K562 (cell line): ENCODE measurements at regions of chrX and their contacts with region 1.

Region 1: GRCh38 chrX:31036895-31037294 is 34.9 kb downstream of the FTHL17 start:
- DNase-seq: peak; percentile 28 to 45 (median 37)
- ATAC-seq: peak; percentile 89
- H3K4me3 ChIP-seq: no peak overlapping the region
- H3K27ac ChIP-seq: no peak overlapping the region
- H3K4me1 ChIP-seq: no peaks in the 10 kb centered on the region
- H3K27me3 ChIP-seq: no peaks in the 10 kb centered on the region
- CTCF ChIP-seq: peak; percentile 55 to 64 (median 59)
- EP300 ChIP-seq: no peak
- POLR2A ChIP-seq: no peak
- RAD21 ChIP-seq: peak; percentile 34 to 70; a peak in 3 of 4 replicates

Region 2: GRCh38 chrX:30935985-30936384 is 100.9 kb before region 1 on chrX:
- CTCF ChIA-PET with region 1: no interaction called
- POLR2A ChIA-PET with region 1: no interaction called
- in situ Hi-C with region 1: no loop called
- intact Hi-C with region 1: loop called (anchors 5 kb)
- DNase-seq: peak; percentile 14 to 51 (median 30)
- ATAC-seq: peak; percentile 95
- H3K4me3 ChIP-seq: no peak overlapping the region
- H3K27ac ChIP-seq: no peak overlapping the region
- H3K4me1 ChIP-seq: no peaks in the 10 kb centered on the region
- H3K27me3 ChIP-seq: no peaks in the 10 kb centered on the region; a peak in 1 of 5 replicates
- CTCF ChIP-seq: peak; percentile 43 to 54 (median 43); a peak in 5 of 6 replicates
- EP300 ChIP-seq: no peak
- POLR2A ChIP-seq: no peak
- RAD21 ChIP-seq: peak; percentile 23 to 59; a peak in 2 of 4 replicates

Region 3: DNA sequence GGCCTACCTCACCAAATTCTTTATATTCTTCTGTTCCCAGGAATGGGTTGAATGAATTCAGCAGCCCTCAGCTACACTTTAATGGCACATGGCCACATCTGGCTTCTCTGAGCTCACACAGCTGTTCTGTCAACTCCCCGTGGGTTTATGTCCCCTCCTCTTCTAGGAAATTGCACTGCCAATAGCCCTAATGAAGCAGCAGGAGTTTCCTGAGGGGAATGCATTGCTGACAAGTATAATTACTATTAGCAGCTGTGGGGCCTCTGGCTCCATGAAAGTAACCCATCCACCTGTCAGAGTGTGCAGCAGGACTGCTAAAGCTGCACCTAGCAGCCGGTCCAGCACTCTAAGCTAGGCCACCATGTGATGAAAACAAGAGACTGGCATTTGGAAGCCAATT is 15.4 kb before region 1 on chrX:
- CTCF ChIA-PET with region 1: no interaction called
- POLR2A ChIA-PET with region 1: no interaction called
- in situ Hi-C with region 1: no loop called
- intact Hi-C with region 1: no loop called
- DNase-seq: no peak
- ATAC-seq: no peak
- H3K4me3 ChIP-seq: no peak overlapping the region
- H3K27ac ChIP-seq: no peak overlapping the region
- H3K4me1 ChIP-seq: no peaks in the 10 kb centered on the region
- H3K27me3 ChIP-seq: no peaks in the 10 kb centered on the region
- CTCF ChIP-seq: no peak
- EP300 ChIP-seq: no peak
- POLR2A ChIP-seq: no peak
- RAD21 ChIP-seq: no peak

Region 4: GRCh38 chrX:31178064-31178768 is 141.3 kb after region 1 on chrX:
- CTCF ChIA-PET with region 1: no interaction called
- POLR2A ChIA-PET with region 1: no interaction called
- in situ Hi-C with region 1: no loop called
- intact Hi-C with region 1: no loop called
- DNase-seq: no peak
- ATAC-seq: no peak
- H3K4me3 ChIP-seq: no peak overlapping the region
- H3K27ac ChIP-seq: no peak overlapping the region
- H3K4me1 ChIP-seq: no peaks in the 10 kb centered on the region
- H3K27me3 ChIP-seq: no peaks in the 10 kb centered on the region
- CTCF ChIP-seq: no peak
- EP300 ChIP-seq: no peak
- POLR2A ChIP-seq: no peak
- RAD21 ChIP-seq: no peak

Region 5: GRCh38 chrX:31293409-31293808 is 256.5 kb after region 1 on chrX:
- CTCF ChIA-PET with region 1: no interaction called
- POLR2A ChIA-PET with region 1: no interaction called
- in situ Hi-C with region 1: no loop called
- intact Hi-C with region 1: loop called (anchors 10 kb)
- DNase-seq: no peak
- ATAC-seq: no peak
- H3K4me3 ChIP-seq: no peak overlapping the region
- H3K27ac ChIP-seq: no peak overlapping the region
- H3K4me1 ChIP-seq: no peaks in the 10 kb centered on the region; a peak in 1 of 5 replicates
- H3K27me3 ChIP-seq: no peaks in the 10 kb centered on the region
- CTCF ChIP-seq: peak in 2 of 3 experiments; percentile 16 to 29; a peak in 2 of 6 replicates
- EP300 ChIP-seq: no peak
- POLR2A ChIP-seq: no peak
- RAD21 ChIP-seq: peak in 1 of 2 experiments; percentile 19; a peak in 1 of 4 replicates

Region 6: GRCh38 chrX:31423609-31424189 is 386.8 kb after region 1 on chrX:
- CTCF ChIA-PET with region 1: no interaction called
- POLR2A ChIA-PET with region 1: no interaction called
- in situ Hi-C with region 1: no loop called
- intact Hi-C with region 1: loop called (anchors 2 kb)
- DNase-seq: peak; percentile 7 to 40 (median 10)
- ATAC-seq: peak; percentile 40; the same call in 1 of the 3 replicates
- H3K4me3 ChIP-seq: no peak overlapping the region
- H3K27ac ChIP-seq: no peak overlapping the region
- H3K4me1 ChIP-seq: no peaks in the 10 kb centered on the region
- H3K27me3 ChIP-seq: no peaks in the 10 kb centered on the region
- CTCF ChIP-seq: peak in 2 of 3 experiments; percentile 33 to 36; a peak in 3 of 6 replicates
- EP300 ChIP-seq: no peak
- POLR2A ChIP-seq: no peak
- RAD21 ChIP-seq: peak; percentile 18 to 56; a peak in 3 of 4 replicates

Region 7: DNA sequence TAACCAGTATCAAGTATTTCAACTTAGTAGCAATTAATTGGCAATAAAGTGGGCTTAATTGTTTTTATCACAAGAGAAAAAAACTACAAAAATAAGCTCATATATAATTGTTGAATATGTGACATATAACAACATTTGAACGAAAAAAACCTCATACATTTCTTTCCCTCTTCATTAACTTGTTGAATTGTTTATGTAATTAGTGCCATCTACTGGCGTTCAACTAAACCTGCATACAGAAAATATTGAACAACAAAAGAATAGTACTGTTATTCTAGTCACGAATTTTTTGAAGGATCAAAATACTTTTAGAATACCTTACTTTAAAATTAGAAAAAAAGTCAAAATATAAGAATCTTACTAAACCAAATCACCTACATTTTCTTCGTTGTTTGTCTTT is 621.5 kb after region 1 on chrX:
- CTCF ChIA-PET with region 1: no interaction called
- POLR2A ChIA-PET with region 1: no interaction called
- in situ Hi-C with region 1: loop called (anchors 25 kb)
- intact Hi-C with region 1: loop called (anchors 5 kb)
- DNase-seq: peak in 3 of 4 experiments; percentile 4 to 8 (median 7)
- ATAC-seq: no peak; the same call in 2 of the 3 replicates
- H3K4me3 ChIP-seq: no peak overlapping the region
- H3K27ac ChIP-seq: no peak overlapping the region
- H3K4me1 ChIP-seq: no peaks in the 10 kb centered on the region; a peak in 1 of 5 replicates
- H3K27me3 ChIP-seq: no peaks in the 10 kb centered on the region
- CTCF ChIP-seq: peak; percentile 6 to 58 (median 19); a peak in 3 of 6 replicates
- EP300 ChIP-seq: no peak
- POLR2A ChIP-seq: no peak
- RAD21 ChIP-seq: peak; percentile 65 to 67

Region 8: DNA sequence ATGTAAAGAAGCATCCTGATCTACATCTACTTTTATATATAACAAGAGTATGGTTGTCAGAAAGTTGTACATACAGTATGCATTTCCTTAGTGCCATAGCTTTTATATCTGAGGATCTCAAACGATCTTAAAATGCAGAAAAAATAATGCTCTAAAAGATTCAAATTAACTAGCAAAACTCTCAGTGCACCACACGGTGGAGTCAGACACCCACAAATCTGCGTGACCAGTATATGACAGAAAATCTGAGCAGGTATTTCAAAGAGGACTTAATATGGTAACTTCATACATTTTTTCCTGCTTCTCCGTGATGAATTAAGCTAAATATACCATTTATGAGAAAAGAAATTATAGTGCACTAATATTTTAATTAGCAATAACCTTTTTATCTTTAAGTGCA is 1371.5 kb after region 1 on chrX:
- CTCF ChIA-PET with region 1: no interaction called
- POLR2A ChIA-PET with region 1: no interaction called
- in situ Hi-C with region 1: no loop called
- intact Hi-C with region 1: loop called (anchors 10 kb)
- DNase-seq: peak in 1 of 4 experiments; percentile 3
- ATAC-seq: no peak
- H3K4me3 ChIP-seq: no peak overlapping the region
- H3K27ac ChIP-seq: no peak overlapping the region
- H3K4me1 ChIP-seq: no peaks in the 10 kb centered on the region
- H3K27me3 ChIP-seq: no peaks in the 10 kb centered on the region
- CTCF ChIP-seq: no peak
- EP300 ChIP-seq: no peak
- POLR2A ChIP-seq: no peak
- RAD21 ChIP-seq: peak in 1 of 2 experiments; percentile 23; a peak in 1 of 4 replicates